Activated CD4-positive, alpha-beta T cell treated with anti-CD3 and anti-CD28 coated beads for 36 hours (primary cell): ENCODE measurements at regions of chr2 and their contacts with region 1.

Region 1: GRCh38 chr2:216498418-216499413 is at the start of gene RPL37A:
- DNase-seq: peak; percentile 95
- ATAC-seq: peak; percentile 96
- H3K4me3 Mint-ChIP-seq: peak within 1 kb of the TSS; percentile 98
- H3K27ac Mint-ChIP-seq: peak within 1 kb of the TSS; percentile 96
- H3K4me1 Mint-ChIP-seq: peaks cover 45% of the 10 kb centered on the region
- H3K27me3 Mint-ChIP-seq: no peaks in the 10 kb centered on the region
- total RNA-seq, gene RPL37A: 3,228 to 4,134 TPM

Region 2: GRCh38 chr2:215684448-215685237 is 814.1 kb before region 1 on chr2:
- CTCF ChIA-PET with region 1: no interaction called
- POLR2A ChIA-PET with region 1: no interaction called
- intact Hi-C with region 1: no loop called
- DNase-seq: no peak
- ATAC-seq: no peak
- H3K4me3 Mint-ChIP-seq: no peak overlapping the region
- H3K27ac Mint-ChIP-seq: no peak overlapping the region
- H3K4me1 Mint-ChIP-seq: peaks cover 28% of the 10 kb centered on the region
- H3K27me3 Mint-ChIP-seq: no peaks in the 10 kb centered on the region

Region 3: DNA sequence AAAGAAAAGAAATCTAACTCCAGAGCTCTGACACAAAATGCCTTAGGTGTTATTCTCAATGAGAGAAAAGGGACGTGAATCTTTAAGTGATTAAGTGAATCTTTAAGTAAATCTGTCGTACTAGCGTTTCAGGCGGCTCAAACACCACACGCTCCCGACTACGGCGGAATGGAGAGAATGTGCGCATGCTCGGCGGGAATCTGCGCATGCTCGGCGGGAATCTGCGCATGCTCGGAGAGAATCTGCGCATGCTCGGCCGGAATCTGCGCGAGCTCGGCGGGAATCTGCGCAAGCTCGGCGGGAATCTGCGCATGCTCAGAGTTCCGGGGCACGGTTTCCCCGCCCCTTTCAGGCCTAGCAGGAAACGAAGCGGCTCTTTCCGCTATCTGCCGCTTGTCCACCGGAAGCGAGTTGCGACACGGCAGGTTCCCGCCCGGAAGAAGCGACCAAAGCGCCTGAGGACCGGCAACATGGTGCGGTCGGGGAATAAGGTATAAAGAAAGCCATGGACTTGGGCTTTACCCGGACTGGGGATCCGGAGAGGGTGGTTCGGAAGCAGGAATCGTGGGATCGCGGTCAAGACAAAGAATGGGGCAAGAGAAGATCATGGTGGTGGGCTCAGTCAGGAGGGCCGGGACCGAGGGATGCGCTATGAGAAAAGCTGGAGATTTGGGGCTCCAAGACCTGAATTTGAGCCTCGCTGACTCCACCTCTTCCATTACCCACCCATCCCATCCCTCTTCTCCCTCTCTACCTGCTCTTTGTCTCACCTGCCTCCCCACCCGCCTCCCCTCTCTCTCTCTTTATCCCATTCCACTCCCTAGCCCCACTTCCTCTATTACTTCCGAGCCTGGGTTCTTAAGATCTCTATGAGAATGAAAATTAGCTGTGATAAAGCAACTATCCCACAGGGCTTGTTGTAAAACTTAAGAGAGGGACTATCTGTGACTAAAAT is 389.5 kb before region 1 on chr2 and contains the start of gene XRCC5:
- CTCF ChIA-PET with region 1: no interaction called
- POLR2A ChIA-PET with region 1: interaction called, 3 read pairs
- intact Hi-C with region 1: loop called (anchors 1 to 5 kb)
- DNase-seq: peak; percentile 99
- ATAC-seq: peak; percentile 75
- H3K4me3 Mint-ChIP-seq: peak within 1 kb of the TSS; percentile 95
- H3K27ac Mint-ChIP-seq: peak within 1 kb of the TSS; percentile 98
- H3K4me1 Mint-ChIP-seq: peaks cover 46% of the 10 kb centered on the region
- H3K27me3 Mint-ChIP-seq: no peaks in the 10 kb centered on the region
- total RNA-seq, gene XRCC5: 395 to 536 TPM

Region 4: GRCh38 chr2:216206041-216206703 is 292.5 kb before region 1 on chr2:
- CTCF ChIA-PET with region 1: no interaction called
- POLR2A ChIA-PET with region 1: no interaction called
- intact Hi-C with region 1: loop called in 1 of 2 experiments (anchors 10 kb)
- DNase-seq: no peak
- ATAC-seq: peak; percentile 88
- H3K4me3 Mint-ChIP-seq: no peak overlapping the region
- H3K27ac Mint-ChIP-seq: peak overlapping the region; percentile 94
- H3K4me1 Mint-ChIP-seq: peaks cover 72% of the 10 kb centered on the region
- H3K27me3 Mint-ChIP-seq: no peaks in the 10 kb centered on the region

Region 5: DNA sequence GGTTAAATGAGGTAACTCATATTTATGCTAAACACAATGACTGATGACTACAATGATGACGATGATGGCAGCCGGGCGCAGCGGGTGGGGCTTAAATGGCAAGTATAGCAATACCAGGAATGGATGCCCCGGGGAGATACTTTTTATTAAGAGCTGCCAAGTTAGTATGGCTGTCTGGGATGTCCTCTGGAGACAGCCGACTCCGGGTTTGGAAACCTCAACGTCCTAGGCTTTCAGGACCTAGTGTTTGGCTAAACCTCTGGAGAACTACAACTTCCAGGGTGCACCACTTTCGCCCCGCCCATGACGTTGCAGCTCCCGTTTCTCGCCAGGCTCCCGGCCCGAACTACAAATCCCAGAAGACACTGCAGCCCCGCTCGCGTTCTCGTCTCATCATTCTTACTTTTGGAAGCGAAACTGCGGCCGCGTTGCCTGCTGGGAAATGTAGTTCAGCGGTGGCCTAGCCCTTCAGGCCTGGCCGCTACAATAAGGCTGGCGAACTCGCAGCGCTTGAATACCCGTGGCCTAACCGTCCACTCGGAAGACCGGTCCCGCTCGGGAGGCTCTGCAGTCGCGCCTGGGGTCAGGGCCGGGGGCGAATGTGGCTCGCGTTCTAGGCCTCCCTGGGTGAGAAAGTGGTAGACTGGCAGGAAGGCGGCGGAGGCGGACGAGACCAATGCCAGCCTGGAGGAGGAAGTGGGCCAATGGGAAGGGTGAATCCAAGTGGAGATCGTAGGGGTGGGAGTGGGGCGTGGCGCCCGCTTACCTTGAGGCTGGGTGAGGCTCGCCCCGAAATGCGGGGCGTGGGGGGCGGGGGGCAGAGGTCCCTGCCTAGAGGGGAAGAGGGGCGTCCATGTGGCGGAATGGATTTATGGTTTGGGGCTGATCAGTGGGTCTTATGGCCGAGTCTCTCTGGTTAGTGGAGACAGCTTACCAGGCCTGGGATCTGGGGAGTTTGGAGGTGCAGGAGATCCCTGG is 86.4 kb before region 1 on chr2 and contains the start of gene SMARCAL1:
- CTCF ChIA-PET with region 1: interaction called, 3 read pairs
- POLR2A ChIA-PET with region 1: interaction called, 5 read pairs
- intact Hi-C with region 1: loop called (anchors 1 kb)
- DNase-seq: peak; percentile 100
- ATAC-seq: peak; percentile 93
- H3K4me3 Mint-ChIP-seq: peak within 1 kb of the TSS; percentile 94
- H3K27ac Mint-ChIP-seq: peak within 1 kb of the TSS; percentile 93
- H3K4me1 Mint-ChIP-seq: peaks cover 13% of the 10 kb centered on the region
- H3K27me3 Mint-ChIP-seq: no peaks in the 10 kb centered on the region
- total RNA-seq, gene SMARCAL1: 25.9 to 27.7 TPM